Prostate gland (tissue), 2 donors: ENCODE measurements at regions of chr7 and their contacts with region 1.

Region 1: DNA sequence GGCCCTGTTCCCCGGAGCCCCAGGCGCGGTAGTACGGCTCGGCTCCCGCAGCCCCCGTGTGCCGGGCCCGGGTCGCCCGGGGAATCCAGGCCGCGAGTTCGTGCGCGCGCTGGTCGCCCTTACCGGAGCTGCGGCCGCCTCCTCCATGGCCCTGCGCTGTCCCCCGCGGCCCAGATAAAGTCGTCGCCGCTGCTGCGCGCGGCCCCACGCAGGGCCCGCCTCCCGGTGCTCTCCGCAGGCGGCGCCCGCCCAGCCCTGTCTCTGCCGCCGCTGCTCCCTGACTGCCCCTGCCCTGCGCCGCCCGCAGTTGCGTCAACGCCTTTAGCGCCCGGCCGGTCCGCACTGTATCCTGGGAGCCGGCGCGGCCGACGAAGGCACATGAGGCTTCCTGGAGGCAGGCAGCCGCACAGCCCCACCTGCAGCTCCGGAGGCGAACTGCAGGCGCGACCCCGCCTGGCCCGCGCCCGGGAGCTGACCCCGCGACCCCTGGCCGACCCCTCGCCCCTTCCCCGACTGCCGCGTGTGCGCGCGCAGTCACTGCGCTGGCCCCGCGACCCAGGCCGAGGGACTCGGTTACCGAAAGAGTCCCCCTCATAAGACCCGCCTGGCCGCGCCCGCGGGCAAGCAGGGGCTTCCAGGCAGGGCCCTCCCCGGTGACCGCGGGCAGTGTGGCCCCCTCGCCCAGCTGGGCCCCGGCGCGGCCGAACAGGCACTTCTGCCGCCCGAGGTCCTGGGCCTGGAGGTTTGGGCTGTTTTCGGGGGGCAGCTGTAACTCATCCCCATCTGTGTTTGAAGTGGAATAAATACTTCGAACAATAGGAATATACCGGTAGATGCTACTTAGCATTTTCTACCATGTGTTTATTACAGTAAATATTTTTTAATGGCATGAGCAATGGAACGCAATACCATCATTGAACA is 127.1 kb upstream of the ZNF746 start:
- DNase-seq: peak; percentile 90
- H3K4me3 ChIP-seq: peak overlapping the region; percentile 97 to 99
- H3K27ac ChIP-seq: peak overlapping the region; percentile 92 to 94
- H3K4me1 ChIP-seq: peaks cover 12% of the 10 kb centered on the region
- H3K27me3 ChIP-seq: no peaks in the 10 kb centered on the region
- CTCF ChIP-seq: peak; percentile 94 to 98 (median 96)
- POLR2A ChIP-seq: peak; percentile 74

Region 2: DNA sequence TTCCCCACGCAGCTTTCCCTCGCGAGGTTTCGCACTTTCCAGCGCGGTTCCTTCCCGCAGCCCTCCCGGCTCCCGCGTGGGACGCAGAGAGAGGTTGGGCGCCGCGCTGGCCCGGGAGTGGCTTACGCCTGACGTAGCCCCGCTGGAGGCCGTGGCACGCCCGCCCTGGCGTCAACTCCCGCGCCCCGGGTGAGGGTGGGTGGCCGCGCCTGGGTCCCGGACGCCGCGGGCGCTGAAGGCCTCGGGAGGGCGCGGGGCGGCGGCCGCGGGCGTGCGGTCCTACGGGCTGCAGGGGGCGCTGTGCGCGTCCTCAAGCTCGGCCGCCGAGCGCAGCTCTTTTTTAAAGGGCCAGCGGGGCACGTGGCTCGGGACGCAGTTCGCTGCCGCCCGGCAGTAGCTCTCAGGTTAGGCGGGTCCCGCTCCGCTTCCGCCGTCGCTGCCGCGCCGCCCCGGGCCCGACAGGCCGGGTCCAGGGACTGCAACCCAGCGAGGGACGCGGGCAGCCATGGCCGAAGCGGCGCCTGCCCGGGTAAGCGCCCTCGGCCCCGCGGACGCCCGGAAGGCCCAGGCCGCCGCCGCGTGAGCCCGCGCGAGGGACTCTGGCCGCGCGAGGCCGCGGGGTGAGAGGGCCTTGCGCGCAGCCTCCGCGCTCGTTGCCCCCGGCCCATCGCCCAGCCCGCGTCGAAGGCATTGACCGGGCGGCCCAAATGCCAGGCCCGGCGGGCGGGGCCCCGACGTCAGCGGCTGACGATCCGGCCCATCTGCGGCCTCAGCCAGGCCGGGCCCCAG is 362.7 kb before region 1 on chr7 and contains the start of gene ZNF783:
- intact Hi-C with region 1: loop called (anchors 10 kb)
- DNase-seq: peak; percentile 83
- H3K4me3 ChIP-seq: peak within 1 kb of the TSS; percentile 53 to 65
- H3K27ac ChIP-seq: peak within 1 kb of the TSS; percentile 91 to 92
- H3K4me1 ChIP-seq: no peaks in the 10 kb centered on the region
- H3K27me3 ChIP-seq: no peaks in the 10 kb centered on the region
- CTCF ChIP-seq: peak; percentile 78 to 93 (median 89)
- POLR2A ChIP-seq: peak; percentile 22
- total RNA-seq, gene ZNF783: 10.7 to 20.7 TPM

Region 3: DNA sequence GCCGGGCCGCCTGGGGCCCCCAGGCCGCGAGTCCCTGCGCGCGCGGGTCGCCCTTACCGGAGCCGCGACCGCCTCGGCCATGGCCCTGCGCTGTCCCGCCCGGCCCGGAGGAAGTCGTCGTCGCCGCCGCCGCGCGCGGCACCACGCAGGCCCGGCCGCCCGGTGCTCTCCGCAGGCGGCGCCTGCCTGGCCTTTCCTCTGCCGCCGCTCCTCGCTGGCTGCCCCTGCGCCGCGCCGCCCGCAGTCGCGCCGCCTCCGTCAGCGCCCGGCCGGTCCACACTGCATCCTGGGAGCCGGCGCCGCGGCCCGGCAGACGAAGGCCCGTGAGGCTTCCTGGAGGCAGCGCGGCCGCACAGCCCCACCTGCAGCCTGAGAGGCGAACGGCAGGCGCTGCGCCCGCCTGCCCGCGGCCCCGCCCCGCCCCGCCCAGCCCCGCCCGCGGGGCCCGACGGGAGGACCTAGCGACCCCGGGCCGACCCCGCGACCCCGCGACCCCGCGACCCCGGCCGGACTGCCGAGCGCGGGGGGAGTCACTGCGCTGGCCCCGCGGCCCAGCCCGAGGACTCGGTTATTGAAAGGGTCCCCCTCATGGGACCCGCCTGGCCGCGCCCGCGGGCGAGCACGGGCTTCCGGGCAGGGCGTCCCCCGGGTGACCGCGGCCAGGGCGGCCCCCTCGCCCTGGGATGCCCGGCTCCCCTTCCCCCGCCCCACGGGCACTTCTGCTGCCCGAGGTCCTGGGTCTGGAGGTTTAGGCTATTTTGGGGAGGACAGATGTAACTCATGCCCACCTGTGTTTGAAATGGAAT is 127.0 kb before region 1 on chr7 and contains the start of gene ZNF746:
- intact Hi-C with region 1: loop called (anchors 5 kb)
- DNase-seq: peak; percentile 72
- H3K4me3 ChIP-seq: peak within 1 kb of the TSS; percentile 66 to 84
- H3K27ac ChIP-seq: peak within 1 kb of the TSS; percentile 78 to 87
- H3K4me1 ChIP-seq: peaks cover 6% of the 10 kb centered on the region
- H3K27me3 ChIP-seq: no peaks in the 10 kb centered on the region
- CTCF ChIP-seq: peak in 3 of 4 experiments; percentile 34 to 81 (median 77)
- POLR2A ChIP-seq: no peak
- total RNA-seq, gene ZNF746: 21.0 to 40.0 TPM

Region 4: GRCh38 chr7:149714050-149714909 is 89.6 kb after region 1 on chr7:
- intact Hi-C with region 1: loop called (anchors 1 kb)
- DNase-seq: peak; percentile 87
- H3K4me3 ChIP-seq: peak overlapping the region; percentile 62 to 79
- H3K27ac ChIP-seq: peak overlapping the region; percentile 47 to 77
- H3K4me1 ChIP-seq: peaks cover 4% of the 10 kb centered on the region
- H3K27me3 ChIP-seq: no peaks in the 10 kb centered on the region
- CTCF ChIP-seq: no peak
- POLR2A ChIP-seq: no peak

Region 5: GRCh38 chr7:149741629-149742028 is 117.0 kb after region 1 on chr7:
- intact Hi-C with region 1: loop called (anchors 2 kb)
- DNase-seq: no peak
- H3K4me3 ChIP-seq: peak overlapping the region in 1 of 2 donors; percentile 6
- H3K27ac ChIP-seq: no peak overlapping the region
- H3K4me1 ChIP-seq: peaks cover 4% of the 10 kb centered on the region
- H3K27me3 ChIP-seq: no peaks in the 10 kb centered on the region
- CTCF ChIP-seq: no peak
- POLR2A ChIP-seq: no peak